ENCODE measurements at regions of chr9 and their contacts with region 1.

Region 1: DNA sequence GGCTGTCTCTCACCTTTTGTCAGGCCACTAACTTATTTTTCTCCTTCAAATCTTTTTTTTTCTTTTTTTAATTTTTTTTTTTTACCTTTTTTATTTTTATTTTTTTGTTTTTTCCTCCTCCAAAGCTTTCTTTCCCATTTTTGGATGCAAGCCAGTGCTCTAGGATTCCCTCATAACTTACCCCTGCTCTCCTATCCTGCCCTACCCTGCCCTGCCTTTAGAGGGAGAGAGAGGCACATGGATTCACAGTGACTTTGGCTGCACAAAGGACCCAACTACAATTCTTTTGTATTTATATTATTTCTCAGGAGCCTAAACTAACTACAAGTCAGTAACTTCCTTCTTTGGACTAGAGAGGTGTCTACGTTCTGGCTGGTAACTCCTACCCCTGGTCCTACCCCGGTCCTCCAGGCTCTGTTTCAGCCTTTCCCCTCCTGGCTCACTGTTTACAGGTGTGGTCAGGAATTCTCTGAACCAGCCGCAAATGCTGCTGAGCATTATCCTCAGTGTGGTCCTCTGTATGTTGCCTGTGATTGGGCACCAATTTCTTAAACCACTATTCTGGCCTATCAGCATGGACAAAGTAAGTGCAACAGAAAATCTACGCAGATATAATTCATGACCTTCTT is 8.4 kb upstream of the RUSC2 start:
- DNase-seq: peak; percentile 57
- H3K4me3 Mint-ChIP-seq: no peak overlapping the region
- H3K27ac Mint-ChIP-seq: no peak overlapping the region
- H3K4me1 Mint-ChIP-seq: no peaks in the 10 kb centered on the region
- H3K27me3 Mint-ChIP-seq: peaks cover 6% of the 10 kb centered on the region

Region 2: DNA sequence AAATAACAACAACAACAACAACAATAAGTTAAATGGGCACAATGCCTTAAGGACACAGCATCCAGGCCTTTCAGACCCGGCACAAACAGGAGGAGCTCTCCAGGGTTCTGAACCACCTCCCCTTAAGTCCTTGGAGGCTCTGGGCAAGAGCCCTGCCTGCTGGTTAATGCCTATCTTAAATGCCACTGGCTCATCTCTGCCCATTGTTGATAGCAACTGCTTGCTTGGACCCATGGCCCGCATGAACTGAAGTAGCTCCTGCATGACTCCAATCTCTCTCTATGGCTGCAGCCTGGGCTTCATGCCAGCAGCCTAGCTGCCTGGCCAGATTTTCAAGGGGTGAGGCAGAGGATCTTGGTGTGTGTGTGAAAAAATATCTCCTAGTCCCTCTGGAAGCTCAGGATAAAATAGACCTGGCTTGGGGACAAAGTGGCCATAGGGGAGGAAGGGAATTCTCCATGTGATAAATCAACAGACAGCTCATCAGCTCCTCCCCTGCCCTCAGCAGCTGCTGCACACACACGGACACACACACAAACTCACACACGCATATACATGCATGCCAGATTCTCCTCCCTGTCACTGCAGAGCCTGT is 1050.5 kb before region 1 on chr9:
- CTCF ChIA-PET with region 1: no interaction called
- intact Hi-C with region 1: no loop called
- DNase-seq: peak; percentile 46
- H3K4me3 Mint-ChIP-seq: no peak overlapping the region
- H3K27ac Mint-ChIP-seq: no peak overlapping the region
- H3K4me1 Mint-ChIP-seq: no peaks in the 10 kb centered on the region
- H3K27me3 Mint-ChIP-seq: no peaks in the 10 kb centered on the region

Region 3: GRCh38 chr9:34759432-34760134 is 721.9 kb before region 1 on chr9:
- CTCF ChIA-PET with region 1: no interaction called
- intact Hi-C with region 1: loop called (anchors 2 kb)
- DNase-seq: no peak
- H3K4me3 Mint-ChIP-seq: no peak overlapping the region
- H3K27ac Mint-ChIP-seq: no peak overlapping the region
- H3K4me1 Mint-ChIP-seq: peaks cover 2% of the 10 kb centered on the region
- H3K27me3 Mint-ChIP-seq: peaks cover 32% of the 10 kb centered on the region

Region 4: DNA sequence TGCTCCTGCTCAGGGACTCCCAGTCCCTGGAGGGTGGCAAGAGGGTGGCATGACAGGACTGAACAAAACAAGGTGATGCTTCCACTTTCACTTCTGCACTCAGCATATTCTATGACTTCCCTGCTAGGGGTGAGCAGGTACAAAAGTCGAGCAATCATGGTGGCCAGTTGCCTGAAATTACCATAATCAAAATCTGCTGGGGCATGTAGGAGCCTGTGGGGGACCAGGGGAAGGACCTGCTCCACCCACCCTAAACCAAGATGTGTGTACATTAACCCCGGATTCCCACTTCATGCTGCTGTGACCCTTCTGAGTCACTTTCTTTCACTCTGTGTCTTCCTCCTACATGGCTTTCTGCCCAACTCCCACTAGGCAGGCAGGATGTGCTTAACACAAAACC is 596.7 kb before region 1 on chr9:
- CTCF ChIA-PET with region 1: no interaction called
- intact Hi-C with region 1: no loop called
- DNase-seq: peak; percentile 52
- H3K4me3 Mint-ChIP-seq: no peak overlapping the region
- H3K27ac Mint-ChIP-seq: no peak overlapping the region
- H3K4me1 Mint-ChIP-seq: no peaks in the 10 kb centered on the region
- H3K27me3 Mint-ChIP-seq: no peaks in the 10 kb centered on the region

Region 5: GRCh38 chr9:35258676-35259474 is 222.6 kb before region 1 on chr9:
- CTCF ChIA-PET with region 1: interaction called, 5 read pairs
- intact Hi-C with region 1: loop called (anchors 1 kb)
- DNase-seq: peak; percentile 68
- H3K4me3 Mint-ChIP-seq: no peak overlapping the region
- H3K27ac Mint-ChIP-seq: no peak overlapping the region
- H3K4me1 Mint-ChIP-seq: no peaks in the 10 kb centered on the region
- H3K27me3 Mint-ChIP-seq: no peaks in the 10 kb centered on the region

Region 6: DNA sequence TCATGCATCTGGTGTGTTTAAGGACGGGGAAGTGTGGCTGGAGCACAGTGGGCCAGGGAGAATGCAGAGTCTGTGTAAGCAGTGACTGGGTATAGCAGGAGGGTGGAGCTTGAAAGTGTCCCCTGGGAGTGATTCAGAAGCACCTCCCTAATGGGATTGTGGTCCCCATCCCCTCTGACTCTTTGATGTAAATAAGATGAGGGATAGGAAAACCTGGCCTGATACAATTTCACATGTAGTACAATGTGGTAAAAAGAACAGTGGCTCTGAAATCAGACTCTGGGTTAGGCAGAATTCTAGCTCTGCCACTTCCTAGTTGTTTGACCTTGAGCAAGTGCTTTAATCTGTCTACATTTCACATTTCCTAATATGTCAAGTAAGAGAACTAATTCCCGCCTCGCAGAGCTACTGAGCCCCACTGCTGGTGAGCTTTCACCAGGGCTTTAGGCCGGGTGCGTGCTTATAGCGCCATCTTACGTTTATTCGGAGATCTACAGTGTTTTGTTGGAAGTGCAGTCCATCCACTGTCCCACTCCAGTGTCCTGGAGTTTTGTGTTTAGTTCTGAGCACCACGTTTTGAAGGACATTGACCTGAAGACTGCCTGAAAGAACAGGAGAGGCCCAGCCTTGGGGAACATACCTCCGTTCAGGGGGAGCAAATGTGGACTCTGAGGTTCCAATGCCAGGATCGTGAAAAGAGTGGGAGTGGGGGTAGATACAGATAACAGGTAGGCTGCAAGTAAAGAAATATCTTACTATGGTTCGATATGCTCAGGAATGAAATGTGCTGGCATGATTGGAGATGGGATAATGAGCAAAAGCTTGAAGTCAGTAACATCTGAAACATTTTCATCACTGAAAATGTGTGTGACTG is 72.4 kb after region 1 on chr9:
- CTCF ChIA-PET with region 1: interaction called, 12 read pairs
- intact Hi-C with region 1: loop called (anchors 1 kb)
- DNase-seq: peak; percentile 71
- H3K4me3 Mint-ChIP-seq: no peak overlapping the region
- H3K27ac Mint-ChIP-seq: no peak overlapping the region
- H3K4me1 Mint-ChIP-seq: no peaks in the 10 kb centered on the region
- H3K27me3 Mint-ChIP-seq: no peaks in the 10 kb centered on the region

Measured in activated naive CD4-positive, alpha-beta T cell treated with anti-CD3 and anti-CD28 coated beads for 36 hours (primary cell).